K562 (cell line): ENCODE measurements at regions of chr7 and their contacts with region 1.

Region 1: DNA sequence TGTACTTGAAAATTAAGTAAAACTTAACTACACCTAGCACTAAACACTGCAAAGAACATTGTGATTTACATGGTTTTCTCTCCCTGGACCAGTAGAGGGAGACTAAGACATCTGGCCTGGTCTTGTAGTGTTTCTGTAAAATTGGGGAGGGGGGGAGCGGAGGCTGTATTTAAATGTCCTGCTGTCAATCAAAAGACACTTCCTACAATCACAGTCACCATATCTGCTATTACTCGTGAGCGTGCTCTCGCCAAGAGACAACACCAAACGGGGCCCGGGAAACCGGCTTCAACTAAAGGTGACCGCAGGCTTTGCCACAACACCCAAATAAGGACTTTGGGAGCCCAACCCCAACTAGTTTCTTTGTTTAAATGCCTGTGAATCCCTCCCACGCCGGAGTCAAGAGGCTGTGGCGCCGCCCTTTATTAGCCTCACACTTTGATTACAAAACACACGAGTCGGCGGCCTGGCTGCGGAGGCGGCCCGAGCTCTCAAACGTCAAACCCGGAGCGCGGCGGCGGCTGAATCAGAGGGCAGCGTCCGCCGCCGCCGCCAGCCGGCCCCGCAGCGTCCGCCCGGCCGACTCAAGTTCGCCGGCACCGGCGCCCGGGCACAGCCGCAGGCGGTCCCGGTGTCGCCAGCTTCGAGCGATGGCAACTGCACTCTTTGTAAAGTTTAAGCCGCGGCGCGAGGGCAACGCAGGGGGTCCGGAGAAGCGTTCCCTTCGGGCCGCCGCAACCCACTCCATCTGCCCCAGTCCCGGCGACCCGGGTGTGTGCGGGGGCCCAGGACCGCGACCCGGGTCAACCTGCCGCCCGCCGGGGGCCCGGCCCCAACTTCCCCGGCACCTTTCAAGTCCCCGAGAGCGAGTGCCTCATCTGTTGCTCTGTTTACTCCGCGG is 1.3 kb downstream of the KDM7A start:
- DNase-seq: peak; percentile 79 to 95 (median 86)
- ATAC-seq: peak; percentile 72
- H3K4me3 ChIP-seq: peak overlapping the region; percentile 73
- H3K27ac ChIP-seq: peak overlapping the region; percentile 44; the same call in 2 of the 3 replicates
- H3K4me1 ChIP-seq: peaks cover 7 to 24% of the 10 kb centered on the region in 2 experiments
- H3K27me3 ChIP-seq: no peaks in the 10 kb centered on the region
- CTCF ChIP-seq: peak; percentile 86 to 98 (median 95)
- EP300 ChIP-seq: peak; percentile 60; the same call in 1 of the 2 replicates
- POLR2A ChIP-seq: peak; percentile 48; the same call in 1 of the 2 replicates
- RAD21 ChIP-seq: peak; percentile 97 to 98

Region 2: DNA sequence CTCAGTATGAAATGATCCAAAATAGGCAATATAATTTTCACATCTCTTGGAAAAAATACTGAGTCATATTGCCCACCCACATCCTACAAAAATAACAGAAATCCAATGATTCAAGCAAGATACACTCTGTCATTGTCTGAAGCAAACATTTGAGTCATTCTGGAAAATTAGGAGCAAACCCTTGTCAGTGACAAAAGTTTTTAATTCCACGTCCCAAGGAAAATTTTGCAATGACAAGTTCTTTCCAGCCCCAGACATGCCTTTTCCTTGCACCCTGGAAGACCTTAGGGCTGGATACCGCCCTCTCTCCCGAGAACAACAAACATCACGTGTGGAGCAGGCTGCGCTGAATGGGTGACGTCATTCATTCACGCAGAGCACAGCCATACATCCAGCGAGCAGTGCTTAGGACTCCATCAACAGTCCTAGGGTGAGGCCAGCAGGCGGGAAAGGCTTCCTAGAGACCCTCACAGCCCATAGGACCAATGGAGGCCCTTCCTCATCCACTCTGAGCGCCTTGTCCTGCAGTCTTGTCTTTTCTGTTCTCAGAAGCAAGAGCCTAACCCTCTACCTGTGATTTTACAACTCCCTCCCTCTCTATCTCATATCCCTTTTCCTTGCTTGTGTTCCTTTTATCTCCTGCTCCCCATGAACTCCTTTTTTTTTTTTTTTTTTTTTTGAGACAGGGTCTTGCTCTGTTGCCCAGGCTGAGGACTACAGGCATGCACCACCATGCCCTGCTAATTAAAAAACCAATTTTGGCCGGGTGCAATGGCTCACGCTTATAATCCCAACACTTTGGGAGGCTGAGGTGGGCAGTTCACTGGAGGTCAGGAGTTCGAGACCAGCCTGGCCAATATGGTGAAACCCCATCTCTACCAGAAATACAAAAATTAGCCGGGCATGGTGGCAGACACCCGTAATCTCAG is 24.9 kb after region 1 on chr7:
- CTCF ChIA-PET with region 1: no interaction called
- POLR2A ChIA-PET with region 1: interaction called, 17 read pairs
- in situ Hi-C with region 1: no loop called
- intact Hi-C with region 1: no loop called
- DNase-seq: peak; percentile 77 to 90 (median 85)
- ATAC-seq: peak; percentile 98
- H3K4me3 ChIP-seq: peak overlapping the region; percentile 1; the same call in 1 of the 2 replicates
- H3K27ac ChIP-seq: no peak overlapping the region
- H3K4me1 ChIP-seq: peaks cover 11 to 18% of the 10 kb centered on the region in 2 experiments; a peak in 3 of 5 replicates
- H3K27me3 ChIP-seq: no peaks in the 10 kb centered on the region
- CTCF ChIP-seq: no peak
- EP300 ChIP-seq: peak; percentile 25; the same call in 1 of the 2 replicates
- POLR2A ChIP-seq: no peak
- RAD21 ChIP-seq: peak; percentile 5 to 29; a peak in 2 of 4 replicates

Region 3: GRCh38 chr7:140304191-140304799 is 128.8 kb after region 1 on chr7:
- CTCF ChIA-PET with region 1: interaction called, 10 read pairs
- POLR2A ChIA-PET with region 1: interaction called, 3 read pairs
- in situ Hi-C with region 1: no loop called
- intact Hi-C with region 1: loop called (anchors 1 kb)
- DNase-seq: peak in 3 of 4 experiments; percentile 44 to 72 (median 72)
- ATAC-seq: peak; percentile 89
- H3K4me3 ChIP-seq: no peak overlapping the region
- H3K27ac ChIP-seq: no peak overlapping the region
- H3K4me1 ChIP-seq: no peaks in the 10 kb centered on the region
- H3K27me3 ChIP-seq: no peaks in the 10 kb centered on the region
- CTCF ChIP-seq: peak; percentile 66 to 90 (median 68)
- EP300 ChIP-seq: no peak
- POLR2A ChIP-seq: no peak
- RAD21 ChIP-seq: peak; percentile 91

Region 4: DNA sequence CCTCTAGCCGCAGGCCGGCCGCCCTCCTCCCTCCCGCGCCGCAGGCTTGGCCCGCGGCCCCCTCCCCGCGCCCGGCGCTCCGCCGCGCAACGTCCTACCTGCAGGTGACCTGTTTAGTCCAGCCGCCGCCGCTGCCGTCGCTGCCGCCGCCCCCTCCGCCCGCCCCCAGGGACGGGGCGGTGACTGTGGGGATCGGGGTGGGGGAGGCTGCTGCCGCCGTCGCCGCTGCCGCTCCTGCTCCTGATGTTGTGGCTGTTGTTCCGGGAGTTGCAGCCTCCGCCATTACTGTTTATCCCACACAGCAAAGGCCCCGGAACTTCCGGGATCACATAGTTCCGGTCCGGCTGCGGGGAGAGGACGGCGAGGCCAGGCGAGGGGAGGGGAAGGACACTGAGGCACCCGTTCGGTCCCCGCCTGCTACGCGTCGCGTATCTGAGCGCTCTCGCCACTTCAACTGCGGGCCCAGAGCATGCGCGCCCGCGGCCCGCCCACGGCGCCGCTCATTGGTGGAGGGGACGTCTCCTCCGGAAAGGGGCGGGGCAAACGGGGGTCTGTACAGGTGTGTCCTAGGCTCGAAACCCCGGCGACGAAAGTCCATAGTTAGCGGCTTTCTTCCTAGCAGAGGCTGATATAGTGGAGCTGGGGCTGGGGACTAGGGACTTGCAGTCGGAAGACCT is 303.7 kb after region 1 on chr7 and contains the start of gene MKRN1:
- CTCF ChIA-PET with region 1: no interaction called
- POLR2A ChIA-PET with region 1: no interaction called
- in situ Hi-C with region 1: no loop called
- intact Hi-C with region 1: loop called (anchors 5 kb)
- DNase-seq: peak; percentile 99 to 100 (median 100)
- ATAC-seq: peak; percentile 94
- H3K4me3 ChIP-seq: peak within 1 kb of the TSS; percentile 93
- H3K27ac ChIP-seq: peak within 1 kb of the TSS; percentile 91
- H3K4me1 ChIP-seq: peaks cover 12 to 35% of the 10 kb centered on the region in 2 experiments
- H3K27me3 ChIP-seq: no peaks in the 10 kb centered on the region
- CTCF ChIP-seq: no peak; a peak in 1 of 6 replicates
- EP300 ChIP-seq: no peak
- POLR2A ChIP-seq: peak; percentile 94
- RAD21 ChIP-seq: no peak; a peak in 1 of 4 replicates
- polyA plus RNA-seq, gene MKRN1: 30.5 to 33.5 TPM